WTC11 (cell line): ENCODE measurements at regions of chr11 and their contacts with region 1.

Region 1: DNA sequence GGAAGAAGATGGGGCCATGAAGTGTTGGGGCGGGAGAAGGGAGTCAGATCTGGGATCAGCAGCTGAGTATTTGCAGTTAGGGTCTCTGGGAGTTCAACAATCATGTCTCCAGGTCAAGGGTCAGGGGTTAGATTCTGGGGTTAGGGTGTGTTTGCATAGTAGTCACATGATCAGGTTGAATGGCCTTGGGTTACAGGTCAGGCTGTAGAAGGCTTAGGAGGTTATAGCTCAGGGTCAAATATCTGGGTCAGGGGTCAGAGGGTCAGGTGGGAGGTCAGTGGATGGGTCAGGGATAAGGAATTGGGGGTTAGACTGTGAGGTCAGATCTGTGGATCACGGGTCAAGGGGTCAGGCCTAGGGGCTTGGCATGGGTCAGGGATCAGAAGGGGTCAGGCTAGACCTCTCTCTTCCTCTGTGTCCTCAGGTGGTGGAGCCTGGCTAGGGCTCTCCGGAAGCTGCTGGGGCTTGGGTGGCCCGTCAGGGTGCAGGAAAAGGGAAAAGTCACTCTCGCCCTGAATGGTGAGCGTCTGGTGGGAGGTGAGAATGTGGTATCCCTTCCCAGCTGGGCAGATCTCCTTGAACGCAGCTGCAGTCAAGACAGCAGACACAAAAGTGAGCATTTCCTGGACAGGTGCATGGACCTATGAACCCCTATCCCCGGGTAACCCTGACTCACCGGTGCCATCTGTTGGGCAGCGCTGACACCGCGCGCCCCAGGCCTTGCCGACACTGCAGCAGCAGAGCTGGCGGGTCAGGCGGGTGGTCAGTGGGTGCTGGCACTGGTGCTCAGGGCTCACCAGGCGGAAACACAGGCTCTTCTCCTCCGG is 6.4 kb downstream of the LTBP3 start:
- DNase-seq: peak; percentile 89
- ATAC-seq: peak; percentile 64
- H3K4me3 Mint-ChIP-seq: peak overlapping the region; percentile 36; the same call in 1 of the 2 replicates
- H3K27ac Mint-ChIP-seq: no peak overlapping the region
- H3K4me1 Mint-ChIP-seq: peaks cover 42% of the 10 kb centered on the region
- H3K27me3 Mint-ChIP-seq: peaks cover 80% of the 10 kb centered on the region
- CTCF ChIP-seq: peak; percentile 49; the same call in 1 of the 2 replicates

Region 2: DNA sequence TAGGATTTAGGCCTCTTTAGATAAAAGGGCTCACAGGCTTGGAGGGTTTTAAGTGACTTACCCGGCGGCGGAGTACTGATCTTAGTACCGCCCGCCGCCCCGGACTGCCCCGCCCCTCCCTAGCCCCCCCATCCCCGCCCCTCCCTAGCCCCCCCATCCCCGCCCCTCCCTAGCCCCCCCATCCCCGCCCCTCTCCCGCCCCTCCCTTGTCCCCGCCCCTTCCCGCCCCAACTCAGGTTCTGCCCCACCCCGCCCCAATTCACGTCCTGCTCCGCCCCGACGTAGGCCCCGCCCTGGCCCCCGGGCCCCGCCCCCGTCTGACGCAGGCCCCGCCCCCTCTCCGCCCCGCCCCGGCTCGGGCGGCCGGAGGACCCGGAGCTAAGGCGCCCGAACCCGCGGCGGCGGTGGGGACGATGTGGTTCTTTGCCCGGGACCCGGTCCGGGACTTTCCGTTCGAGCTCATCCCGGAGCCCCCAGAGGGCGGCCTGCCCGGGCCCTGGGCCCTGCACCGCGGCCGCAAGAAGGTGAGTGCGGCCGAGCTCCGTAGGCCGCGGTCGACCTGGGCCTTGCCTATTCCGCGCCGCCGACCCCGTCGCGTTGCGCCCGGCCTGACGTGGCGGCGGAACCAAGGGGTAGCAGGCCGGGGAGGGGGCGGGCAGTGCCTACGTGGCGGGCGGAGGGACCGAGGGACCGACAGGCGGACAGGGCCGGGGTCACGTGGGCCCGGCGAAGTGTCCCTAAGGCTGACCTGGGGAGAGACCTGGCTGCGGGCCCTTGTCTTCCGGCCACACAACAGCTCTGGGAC is 26.8 kb before region 1 on chr11 and contains the start of gene SCYL1:
- CTCF ChIA-PET with region 1: interaction called, 10 read pairs
- POLR2A ChIA-PET with region 1: no interaction called
- DNase-seq: peak; percentile 78
- ATAC-seq: peak; percentile 82
- H3K4me3 Mint-ChIP-seq: peak within 1 kb of the TSS; percentile 73
- H3K27ac Mint-ChIP-seq: no peak within 1 kb of the TSS; the same call in 1 of the 2 replicates
- H3K4me1 Mint-ChIP-seq: peaks cover 19% of the 10 kb centered on the region
- H3K27me3 Mint-ChIP-seq: peaks cover 11% of the 10 kb centered on the region
- CTCF ChIP-seq: no peak
- total RNA-seq, gene SCYL1: 69.6 to 76.8 TPM (median 73.0 TPM) in 3 replicates

Region 3: DNA sequence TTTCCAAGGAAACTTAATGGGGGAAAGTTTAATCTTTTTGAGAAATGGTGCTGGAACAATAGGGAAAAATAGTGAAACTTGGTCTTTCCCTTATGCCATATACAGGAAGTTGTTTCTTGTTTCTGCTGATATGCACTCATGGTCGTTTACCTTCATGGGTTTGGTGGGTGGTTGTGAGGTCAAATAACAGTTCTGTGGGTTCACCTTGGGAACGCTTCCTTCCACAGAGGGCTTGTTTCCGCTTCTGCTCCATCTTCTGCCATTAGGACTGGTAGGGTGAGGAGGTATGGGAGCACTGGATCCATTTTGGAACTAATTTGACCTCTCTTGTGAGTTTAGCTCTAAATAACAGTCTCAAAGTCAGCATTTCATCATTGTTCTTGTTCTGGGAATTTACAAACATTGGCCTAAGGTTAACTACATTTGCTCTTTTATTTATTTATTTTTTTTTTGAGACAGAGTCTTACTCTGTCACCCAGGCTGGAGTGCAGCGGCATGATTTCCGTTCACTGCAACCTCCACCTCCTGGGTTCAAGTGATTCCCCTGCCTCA is 128.5 kb after region 1 on chr11:
- CTCF ChIA-PET with region 1: no interaction called
- POLR2A ChIA-PET with region 1: no interaction called
- DNase-seq: no peak
- ATAC-seq: no peak
- H3K4me3 Mint-ChIP-seq: no peak overlapping the region
- H3K27ac Mint-ChIP-seq: no peak overlapping the region
- H3K4me1 Mint-ChIP-seq: no peaks in the 10 kb centered on the region
- H3K27me3 Mint-ChIP-seq: peaks cover 9% of the 10 kb centered on the region; the same call in 1 of the 2 replicates
- CTCF ChIP-seq: no peak